CD4-positive, alpha-beta memory T cell (primary cell): ENCODE measurements at regions of chr2 and their contacts with region 1.

Region 1: DNA sequence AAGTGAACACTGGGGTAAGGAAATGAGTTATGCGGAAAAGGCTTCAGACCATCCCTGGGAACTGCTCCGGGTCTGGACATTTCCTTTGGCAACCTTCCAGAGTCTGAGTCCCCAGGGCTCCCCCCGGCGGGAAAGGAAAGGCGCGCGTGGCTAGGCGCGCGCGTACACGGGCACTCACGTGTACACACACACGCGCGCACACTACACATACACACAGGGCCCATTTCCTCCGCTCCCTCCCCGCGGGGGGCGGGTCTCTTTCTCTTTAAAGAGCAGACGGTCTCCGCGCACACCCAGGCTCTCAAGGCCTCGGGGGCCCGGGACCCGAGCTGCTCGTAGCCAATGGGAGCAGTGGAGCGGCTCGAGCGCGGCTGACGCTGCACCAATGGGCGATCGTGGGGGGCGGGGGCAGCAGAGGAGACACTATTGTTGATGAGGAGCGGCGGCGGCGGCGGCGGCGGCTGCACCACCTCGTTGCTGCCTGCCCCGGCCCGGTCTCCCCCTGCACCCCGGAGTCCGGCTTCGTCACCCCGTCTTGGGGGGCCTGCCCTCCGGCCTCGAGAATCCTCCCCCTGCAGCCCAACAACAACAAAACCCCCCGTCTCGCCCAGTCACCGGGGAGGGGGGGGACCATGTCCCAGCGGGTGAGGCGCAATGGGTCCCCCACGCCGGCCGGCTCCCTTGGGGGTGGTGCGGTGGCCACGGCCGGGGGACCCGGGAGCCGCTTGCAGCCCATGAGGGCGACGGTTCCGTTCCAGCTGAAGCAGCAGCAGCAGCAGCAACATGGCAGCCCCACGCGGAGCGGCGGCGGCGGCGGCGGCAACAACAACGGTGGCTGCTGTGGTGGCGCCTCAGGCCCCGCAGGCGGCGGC is at the start of gene FAM117B:
- DNase-seq: peak; percentile 95 to 99 (median 97)
- H3K4me3 ChIP-seq: peak within 1 kb of the TSS; percentile 55 to 72
- H3K4me3 Mint-ChIP-seq: peak within 1 kb of the TSS; percentile 94 to 99 (median 98)
- H3K27ac ChIP-seq: peak within 1 kb of the TSS; percentile 67
- H3K27ac Mint-ChIP-seq: peak within 1 kb of the TSS; percentile 95 to 100 (median 99)
- H3K4me1 ChIP-seq: peaks cover 52% of the 10 kb centered on the region
- H3K4me1 Mint-ChIP-seq: peaks cover 36 to 48% (median 42%) of the 10 kb centered on the region in 4 donors
- H3K27me3 ChIP-seq: no peaks in the 10 kb centered on the region
- H3K27me3 Mint-ChIP-seq: no peaks in the 10 kb centered on the region
- total RNA-seq, gene FAM117B: 26.2 to 27.1 TPM

Region 2: GRCh38 chr2:202265467-202266277 is 369.1 kb before region 1 on chr2 and contains the start of gene NOP58:
- CTCF ChIA-PET with region 1: no interaction called
- POLR2A ChIA-PET with region 1: interaction called, 6 read pairs
- intact Hi-C with region 1: loop called (anchors 10 kb)
- DNase-seq: peak; percentile 91 to 96 (median 94)
- H3K4me3 ChIP-seq: peak within 1 kb of the TSS; percentile 92 to 97
- H3K4me3 Mint-ChIP-seq: peak within 1 kb of the TSS in 6 of 8 donors; percentile 55 to 79 (median 67)
- H3K27ac ChIP-seq: peak within 1 kb of the TSS; percentile 99
- H3K27ac Mint-ChIP-seq: peak within 1 kb of the TSS in 5 of 7 donors; percentile 48 to 91 (median 72)
- H3K4me1 ChIP-seq: peaks cover 39% of the 10 kb centered on the region
- H3K4me1 Mint-ChIP-seq: peaks cover 9 to 35% (median 16%) of the 10 kb centered on the region in 4 donors
- H3K27me3 ChIP-seq: no peaks in the 10 kb centered on the region
- H3K27me3 Mint-ChIP-seq: no peaks in the 10 kb centered on the region
- total RNA-seq, gene NOP58: 114 to 123 TPM

Region 3: GRCh38 chr2:202660796-202661195 is 26.0 kb after region 1 on chr2:
- CTCF ChIA-PET with region 1: interaction called, 4 read pairs
- POLR2A ChIA-PET with region 1: interaction called, 16 read pairs
- intact Hi-C with region 1: no loop called
- DNase-seq: no peak
- H3K4me3 ChIP-seq: no peak overlapping the region
- H3K4me3 Mint-ChIP-seq: no peak overlapping the region
- H3K27ac ChIP-seq: no peak overlapping the region
- H3K27ac Mint-ChIP-seq: peak overlapping the region in 1 of 7 donors; percentile 4
- H3K4me1 ChIP-seq: peaks cover 49% of the 10 kb centered on the region
- H3K4me1 Mint-ChIP-seq: peaks cover 37 to 75% (median 52%) of the 10 kb centered on the region in 4 donors
- H3K27me3 ChIP-seq: no peaks in the 10 kb centered on the region
- H3K27me3 Mint-ChIP-seq: no peaks in the 10 kb centered on the region

Region 4: DNA sequence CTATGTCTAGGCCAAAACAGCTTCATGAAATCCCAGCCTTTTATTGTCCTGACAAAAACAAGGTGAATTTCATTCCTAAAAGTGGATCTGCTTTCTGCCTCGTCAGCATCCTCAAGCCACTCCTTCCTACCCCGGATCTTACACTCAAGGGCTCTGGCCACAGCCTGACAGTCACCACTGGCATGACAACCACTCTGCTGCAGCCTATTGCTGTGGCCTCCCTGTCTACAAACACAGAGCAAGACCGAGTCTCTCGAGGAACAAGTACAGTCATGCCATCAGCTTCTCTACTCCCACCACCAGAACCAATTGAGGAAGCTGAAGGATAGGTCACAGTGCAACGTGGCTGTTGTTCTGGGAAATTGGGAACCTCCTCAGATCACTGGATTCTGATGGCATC is 130.6 kb after region 1 on chr2:
- CTCF ChIA-PET with region 1: no interaction called
- POLR2A ChIA-PET with region 1: interaction called, 4 read pairs
- intact Hi-C with region 1: loop called (anchors 10 kb)
- DNase-seq: no peak
- H3K4me3 ChIP-seq: no peak overlapping the region
- H3K4me3 Mint-ChIP-seq: no peak overlapping the region
- H3K27ac ChIP-seq: no peak overlapping the region
- H3K27ac Mint-ChIP-seq: peak overlapping the region in 1 of 7 donors; percentile 45
- H3K4me1 ChIP-seq: no peaks in the 10 kb centered on the region
- H3K4me1 Mint-ChIP-seq: no peaks in the 10 kb centered on the region
- H3K27me3 ChIP-seq: no peaks in the 10 kb centered on the region
- H3K27me3 Mint-ChIP-seq: no peaks in the 10 kb centered on the region

Region 5: DNA sequence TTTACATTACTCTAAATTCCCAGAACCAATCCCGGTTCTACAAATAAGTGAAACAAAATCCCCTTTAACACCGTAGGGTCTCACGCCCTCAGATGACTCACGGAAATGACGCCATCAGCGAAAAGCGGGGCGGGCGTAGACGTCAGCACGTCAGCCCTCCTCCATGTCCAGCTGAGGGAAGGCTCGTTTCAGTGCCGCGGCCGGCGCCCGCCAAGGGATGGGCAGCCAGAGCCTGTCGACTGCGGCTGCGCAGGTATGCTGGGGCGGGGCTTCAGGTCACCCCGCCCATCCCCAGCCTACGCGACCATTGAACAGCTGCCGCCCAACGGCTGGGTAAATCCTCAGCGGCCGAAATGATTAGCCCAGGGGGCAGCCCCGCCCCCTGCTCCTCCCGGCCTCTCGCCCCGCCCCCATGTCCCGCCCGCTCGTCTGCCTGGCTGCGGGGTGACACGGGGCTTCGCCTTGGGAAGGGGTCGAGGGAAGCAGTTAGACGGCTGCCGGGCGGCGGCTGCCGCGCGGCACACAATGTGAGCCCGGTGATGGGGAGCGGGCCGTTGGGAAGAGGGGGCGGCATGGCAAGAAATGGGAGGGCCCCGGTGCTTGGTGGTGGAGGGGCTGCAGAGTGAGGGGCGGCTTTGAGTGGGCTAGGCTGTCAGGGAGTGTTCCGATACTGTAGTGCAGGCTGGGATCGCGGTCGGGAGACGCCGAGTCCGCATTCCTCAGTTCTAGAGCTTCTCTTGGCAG is 379.8 kb after region 1 on chr2 and contains the start of gene NBEAL1:
- CTCF ChIA-PET with region 1: no interaction called
- POLR2A ChIA-PET with region 1: no interaction called
- intact Hi-C with region 1: loop called (anchors 1 kb)
- DNase-seq: peak; percentile 95 to 98 (median 95)
- H3K4me3 ChIP-seq: peak within 1 kb of the TSS; percentile 87 to 93
- H3K4me3 Mint-ChIP-seq: peak within 1 kb of the TSS; percentile 86 to 98 (median 94)
- H3K27ac ChIP-seq: peak within 1 kb of the TSS; percentile 85
- H3K27ac Mint-ChIP-seq: peak within 1 kb of the TSS; percentile 88 to 99 (median 97)
- H3K4me1 ChIP-seq: peaks cover 32% of the 10 kb centered on the region
- H3K4me1 Mint-ChIP-seq: peaks cover 28 to 47% (median 34%) of the 10 kb centered on the region in 4 donors
- H3K27me3 ChIP-seq: no peaks in the 10 kb centered on the region
- H3K27me3 Mint-ChIP-seq: peaks cover 0 to 1% of the 10 kb centered on the region in 2 donors
- total RNA-seq, gene NBEAL1: 15.1 to 15.9 TPM

Region 6: DNA sequence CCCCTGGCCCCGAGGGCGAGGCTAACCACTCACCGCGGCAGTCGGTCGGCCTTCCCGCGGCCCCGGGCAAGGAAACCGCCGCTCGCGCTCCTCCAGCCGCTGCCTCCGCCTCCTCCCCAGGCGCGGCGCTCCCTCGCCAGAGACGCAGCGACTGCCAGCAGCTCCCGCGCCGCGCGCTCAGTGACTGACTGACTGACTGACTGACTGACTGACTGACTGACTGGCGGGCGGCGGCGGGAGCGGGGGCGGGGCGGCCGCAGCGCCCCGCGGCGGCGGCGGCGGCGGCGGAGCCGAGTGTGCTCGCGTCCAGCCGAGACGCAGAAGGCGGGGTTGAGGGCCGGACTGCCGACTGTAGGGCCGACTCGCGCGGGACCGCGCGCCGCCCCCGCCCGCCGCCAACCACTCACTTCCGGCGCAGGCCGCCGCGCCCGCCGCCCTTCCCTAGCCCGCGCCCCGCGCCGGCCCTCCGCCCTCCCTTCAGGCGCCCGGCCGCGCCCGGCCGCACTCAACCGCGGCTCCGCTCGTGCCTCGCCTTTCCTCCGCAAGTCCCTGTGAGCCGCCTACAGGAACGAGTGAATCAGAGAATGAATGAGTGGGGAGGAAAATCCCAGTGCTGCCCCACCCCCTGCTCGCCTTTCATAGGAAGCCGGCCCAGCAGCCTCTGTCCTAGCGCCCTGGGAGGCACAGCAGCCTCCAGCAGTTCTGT is 900.4 kb after region 1 on chr2 and contains the start of gene RAPH1:
- CTCF ChIA-PET with region 1: no interaction called
- POLR2A ChIA-PET with region 1: no interaction called
- intact Hi-C with region 1: loop called (anchors 10 kb)
- DNase-seq: peak; percentile 39 to 67 (median 56)
- H3K4me3 ChIP-seq: peak within 1 kb of the TSS; percentile 20 to 58
- H3K4me3 Mint-ChIP-seq: peak within 1 kb of the TSS; percentile 86 to 95 (median 91)
- H3K27ac ChIP-seq: no peak within 1 kb of the TSS
- H3K27ac Mint-ChIP-seq: peak within 1 kb of the TSS; percentile 72 to 89 (median 79)
- H3K4me1 ChIP-seq: peaks cover 16% of the 10 kb centered on the region
- H3K4me1 Mint-ChIP-seq: peaks cover 14 to 29% (median 21%) of the 10 kb centered on the region in 4 donors
- H3K27me3 ChIP-seq: no peaks in the 10 kb centered on the region
- H3K27me3 Mint-ChIP-seq: peaks cover 8% of the 10 kb centered on the region in 2 donors
- total RNA-seq, gene RAPH1: 2.1 to 2.6 TPM